IMR-90 (cell line): ENCODE measurements at regions of chr4 and their contacts with region 1.

Region 1: DNA sequence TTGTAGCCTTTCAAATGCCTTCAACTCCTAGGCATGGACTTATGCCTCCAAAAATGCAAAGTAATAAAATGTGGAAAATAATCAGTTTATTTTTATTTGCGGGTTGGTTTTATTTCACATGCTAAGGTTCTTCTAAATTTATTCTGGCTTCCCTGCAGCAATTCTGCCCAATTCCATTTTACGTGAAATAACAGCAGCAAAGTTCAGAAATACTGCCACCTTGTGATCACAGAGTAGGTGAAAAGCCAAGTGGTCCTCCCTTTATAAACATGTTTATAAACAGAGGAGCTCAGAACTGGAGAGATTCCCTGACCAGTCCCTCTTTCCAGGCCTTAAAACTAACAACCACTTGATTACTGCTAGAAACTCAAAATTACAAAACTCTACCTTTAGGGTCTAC is 14.7 kb upstream of the DCHS2 start:
- DNase-seq: peak; percentile 13
- ATAC-seq: 0 out of 2 replicates have a peak, but pooled peaks have one; percentile 42
- H3K4me3 ChIP-seq: no peak overlapping the region
- H3K27ac ChIP-seq: no peak overlapping the region
- H3K4me1 ChIP-seq: no peaks in the 10 kb centered on the region
- H3K27me3 ChIP-seq: no peaks in the 10 kb centered on the region; the same call in 1 of the 2 replicates
- CTCF ChIP-seq: peak; percentile 35; the same call in 1 of the 2 replicates
- POLR2A ChIP-seq: no peak
- RAD21 ChIP-seq: peak; percentile 31; the same call in 1 of the 2 replicates

Region 2: DNA sequence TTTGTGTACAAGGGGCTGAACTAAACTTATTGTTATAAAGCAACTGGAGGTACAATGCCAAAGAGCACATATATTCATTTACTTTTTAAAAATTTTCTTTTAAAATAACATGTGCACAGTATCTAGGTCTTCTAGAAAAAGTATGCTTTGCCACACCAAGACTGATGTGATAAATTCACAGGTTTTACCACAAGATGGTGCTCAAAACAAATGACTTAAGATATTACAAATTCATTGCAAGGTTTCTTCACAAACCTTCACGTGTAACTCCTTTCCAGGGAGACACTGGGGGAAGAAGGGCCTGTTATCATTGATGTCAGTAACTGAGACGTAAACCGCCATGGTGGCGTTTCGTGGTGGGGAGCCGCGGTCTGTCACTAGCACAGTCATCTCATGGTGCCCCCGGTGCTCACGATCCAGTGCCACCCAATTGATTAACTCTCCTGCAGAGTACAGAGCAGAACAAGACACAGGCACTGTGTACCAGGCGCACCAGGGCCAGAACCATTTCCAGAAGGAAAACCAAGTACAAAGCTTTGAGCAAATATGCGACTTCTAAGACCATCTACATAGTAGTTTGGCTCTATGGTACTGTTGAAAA is 176.9 kb before region 1 on chr4:
- CTCF ChIA-PET with region 1: interaction called, 3 read pairs
- POLR2A ChIA-PET with region 1: no interaction called
- dilution Hi-C with region 1: no loop called
- in situ Hi-C with region 1: no loop called
- intact Hi-C with region 1: loop called (anchors 1 kb)
- DNase-seq: peak; percentile 10
- ATAC-seq: no peak
- H3K4me3 ChIP-seq: no peak overlapping the region
- H3K27ac ChIP-seq: no peak overlapping the region
- H3K4me1 ChIP-seq: no peaks in the 10 kb centered on the region
- H3K27me3 ChIP-seq: 0 out of 2 replicates have a peak, but pooled peaks cover 2% of the 10 kb centered on the region
- CTCF ChIP-seq: 0 out of 2 replicates have a peak, but pooled peaks have one; percentile 21
- POLR2A ChIP-seq: no peak
- RAD21 ChIP-seq: no peak

Region 3: DNA sequence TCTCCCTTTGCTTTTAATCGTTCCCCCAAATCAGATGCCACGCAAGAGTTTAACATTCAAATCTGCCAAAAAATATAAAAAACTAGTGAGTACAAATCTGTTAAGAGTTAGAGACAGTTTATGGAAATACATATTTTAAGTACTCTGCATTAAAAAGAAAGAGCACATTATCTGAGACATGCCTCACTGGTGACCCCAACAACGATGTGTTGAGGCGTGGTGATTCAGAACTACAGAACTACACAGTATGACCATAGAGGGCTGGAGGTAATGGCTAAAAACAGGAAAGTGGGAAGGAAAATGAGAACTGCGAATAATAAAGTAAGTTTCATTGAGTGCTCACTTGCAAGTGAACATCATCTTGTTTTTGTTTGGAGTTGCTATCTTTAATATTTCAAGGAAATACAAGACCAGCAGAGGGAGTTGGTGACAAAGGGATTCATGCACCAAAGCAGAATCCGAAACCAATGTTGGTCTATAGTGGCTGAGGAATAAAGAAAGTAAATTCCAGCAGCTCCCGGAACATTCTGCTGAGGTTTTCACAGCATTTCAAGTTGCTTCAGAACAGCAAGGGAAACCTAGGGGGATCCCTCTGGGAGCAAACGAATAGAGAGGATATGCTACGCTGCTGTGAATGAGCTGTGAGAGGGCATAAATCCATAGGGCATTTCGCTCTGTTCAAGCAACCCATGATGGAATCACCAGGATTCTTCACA is 106.8 kb before region 1 on chr4:
- CTCF ChIA-PET with region 1: no interaction called
- POLR2A ChIA-PET with region 1: no interaction called
- dilution Hi-C with region 1: no loop called
- in situ Hi-C with region 1: no loop called
- intact Hi-C with region 1: loop called (anchors 1 kb)
- DNase-seq: peak; percentile 8
- ATAC-seq: no peak; the same call in 1 of the 2 replicates
- H3K4me3 ChIP-seq: no peak overlapping the region
- H3K27ac ChIP-seq: no peak overlapping the region
- H3K4me1 ChIP-seq: no peaks in the 10 kb centered on the region
- H3K27me3 ChIP-seq: no peaks in the 10 kb centered on the region
- CTCF ChIP-seq: no peak
- POLR2A ChIP-seq: no peak
- RAD21 ChIP-seq: 0 out of 2 replicates have a peak, but pooled peaks have one; percentile 20

Region 4: GRCh38 chr4:154471526-154472331 is 34.5 kb before region 1 on chr4:
- CTCF ChIA-PET with region 1: no interaction called
- POLR2A ChIA-PET with region 1: no interaction called
- dilution Hi-C with region 1: no loop called
- in situ Hi-C with region 1: no loop called
- intact Hi-C with region 1: loop called (anchors 1 kb)
- DNase-seq: no peak
- ATAC-seq: no peak
- H3K4me3 ChIP-seq: no peak overlapping the region
- H3K27ac ChIP-seq: no peak overlapping the region
- H3K4me1 ChIP-seq: no peaks in the 10 kb centered on the region
- H3K27me3 ChIP-seq: no peaks in the 10 kb centered on the region
- CTCF ChIP-seq: no peak
- POLR2A ChIP-seq: no peak
- RAD21 ChIP-seq: no peak